Transverse colon (tissue), 4 donors: ENCODE measurements at regions of chr12 and their contacts with region 1.

Region 1: GRCh38 chr12:712172-712863 is 40.1 kb upstream of the WNK1 start:
- DNase-seq: no peak
- H3K4me3 ChIP-seq: no peak overlapping the region
- H3K27ac ChIP-seq: no peak overlapping the region
- H3K4me1 ChIP-seq: no peaks in the 10 kb centered on the region
- H3K27me3 ChIP-seq: no peaks in the 10 kb centered on the region
- CTCF ChIP-seq: no peak
- EP300 ChIP-seq: no peak
- POLR2A ChIP-seq: no peak

Region 2: DNA sequence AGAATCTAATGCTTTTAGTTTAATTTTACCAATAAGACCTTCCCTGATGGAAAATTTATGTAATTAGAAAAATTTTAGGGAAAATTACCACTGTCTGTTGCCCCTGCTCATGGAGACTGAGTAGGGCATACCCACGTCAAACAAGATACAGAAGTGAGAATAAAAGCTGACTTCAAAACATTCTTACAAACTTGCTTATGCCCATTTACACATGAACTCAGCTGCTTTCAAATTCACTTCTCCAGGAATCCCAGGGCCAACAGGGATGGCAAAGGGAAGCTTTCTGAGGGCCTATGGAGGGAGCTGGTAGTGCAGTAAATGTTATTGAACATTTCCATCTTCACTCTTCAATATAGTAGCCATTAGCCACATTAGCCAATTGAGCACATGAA is 44.2 kb before region 1 on chr12:
- in situ Hi-C with region 1: no loop called
- intact Hi-C with region 1: loop called (anchors 2 kb)
- DNase-seq: no peak
- H3K4me3 ChIP-seq: no peak overlapping the region
- H3K27ac ChIP-seq: no peak overlapping the region
- H3K4me1 ChIP-seq: no peaks in the 10 kb centered on the region
- H3K27me3 ChIP-seq: no peaks in the 10 kb centered on the region
- CTCF ChIP-seq: no peak
- EP300 ChIP-seq: no peak
- POLR2A ChIP-seq: no peak

Region 3: DNA sequence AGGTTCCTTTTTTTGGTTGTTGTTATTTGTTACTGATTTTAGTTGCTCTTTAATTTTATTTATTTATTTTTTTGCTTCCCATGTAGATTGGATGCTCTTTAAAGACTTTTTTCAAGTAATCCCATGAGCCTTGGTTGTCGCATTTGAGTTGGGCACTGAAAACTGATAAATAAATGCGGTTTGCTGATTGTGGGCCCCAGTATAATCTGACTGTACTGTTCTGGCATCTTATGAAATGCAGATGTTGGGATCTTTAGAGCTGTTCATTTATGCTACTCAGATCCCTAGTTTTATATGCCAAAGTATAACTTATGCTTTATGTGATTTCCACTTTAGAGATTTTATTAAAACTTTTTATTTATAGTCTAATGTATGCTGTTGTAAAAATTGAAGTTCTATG is 73.4 kb after region 1 on chr12:
- in situ Hi-C with region 1: no loop called
- intact Hi-C with region 1: loop called (anchors 2 kb)
- DNase-seq: no peak
- H3K4me3 ChIP-seq: no peak overlapping the region
- H3K27ac ChIP-seq: no peak overlapping the region
- H3K4me1 ChIP-seq: peaks cover 9 to 53% (median 14%) of the 10 kb centered on the region in 4 donors
- H3K27me3 ChIP-seq: no peaks in the 10 kb centered on the region
- CTCF ChIP-seq: no peak
- EP300 ChIP-seq: no peak
- POLR2A ChIP-seq: no peak

Region 4: DNA sequence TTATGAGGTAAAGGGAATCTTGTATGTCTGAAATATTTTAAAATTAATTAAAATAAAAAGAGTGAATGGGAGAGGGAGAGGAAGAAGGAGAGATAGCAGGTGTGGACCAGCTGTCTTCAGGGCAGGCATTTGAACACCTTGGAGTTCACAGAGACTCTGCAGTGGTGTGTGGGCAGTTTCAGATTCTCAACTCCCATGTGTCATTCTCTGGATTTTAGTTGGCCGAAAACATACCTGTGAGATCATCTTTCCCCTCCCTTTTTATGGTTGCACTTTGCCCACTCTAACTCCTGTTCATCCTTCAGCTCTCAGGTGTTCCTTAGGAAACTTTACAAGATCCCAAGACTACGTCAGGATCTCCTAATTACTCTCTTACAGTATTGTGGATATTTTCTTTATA is 386.8 kb after region 1 on chr12:
- in situ Hi-C with region 1: no loop called
- intact Hi-C with region 1: no loop called
- DNase-seq: peak; percentile 33
- H3K4me3 ChIP-seq: no peak overlapping the region
- H3K27ac ChIP-seq: peak overlapping the region in 2 of 4 donors; percentile 22 to 25
- H3K4me1 ChIP-seq: peaks cover 0 to 18% (median 5%) of the 10 kb centered on the region in 4 donors
- H3K27me3 ChIP-seq: no peaks in the 10 kb centered on the region
- CTCF ChIP-seq: no peak
- EP300 ChIP-seq: no peak
- POLR2A ChIP-seq: no peak